ENCODE measurements at regions of chr6 and their contacts with region 1.

Region 1: GRCh38 chr6:166235666-166236292 is 68.1 kb upstream of the TBXT start:
- DNase-seq: no peak
- ATAC-seq: peak; percentile 32
- H3K4me3 Mint-ChIP-seq: peak overlapping the region; percentile 29
- H3K27ac Mint-ChIP-seq: peak overlapping the region; percentile 87
- H3K4me1 Mint-ChIP-seq: peaks cover 70% of the 10 kb centered on the region
- H3K27me3 Mint-ChIP-seq: peaks cover 34% of the 10 kb centered on the region

Region 2: DNA sequence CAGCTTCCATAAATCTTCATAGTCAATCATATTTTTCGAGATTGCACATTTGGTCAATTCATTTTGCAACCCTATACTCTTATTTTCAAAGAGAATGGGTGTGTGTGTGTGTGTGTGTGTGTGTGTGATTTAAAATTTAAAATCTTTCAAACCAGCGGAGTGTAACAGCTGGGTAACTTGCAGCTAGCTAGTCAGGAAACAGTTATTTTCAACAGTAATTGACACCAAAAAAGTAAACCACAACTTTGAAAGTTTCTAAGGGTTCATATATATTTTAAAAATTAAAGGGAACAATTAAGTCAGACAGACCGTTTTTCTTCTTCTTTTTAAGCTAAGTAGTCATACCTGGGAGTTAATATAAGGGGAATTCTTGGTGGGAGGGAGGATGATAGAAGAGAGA is 15.4 kb after region 1 on chr6:
- CTCF ChIA-PET with region 1: interaction called, 12 read pairs
- POLR2A ChIA-PET with region 1: interaction called, 3 read pairs
- DNase-seq: no peak
- ATAC-seq: no peak
- H3K4me3 Mint-ChIP-seq: no peak overlapping the region
- H3K27ac Mint-ChIP-seq: no peak overlapping the region
- H3K4me1 Mint-ChIP-seq: peaks cover 37% of the 10 kb centered on the region
- H3K27me3 Mint-ChIP-seq: peaks cover 40% of the 10 kb centered on the region

Region 3: DNA sequence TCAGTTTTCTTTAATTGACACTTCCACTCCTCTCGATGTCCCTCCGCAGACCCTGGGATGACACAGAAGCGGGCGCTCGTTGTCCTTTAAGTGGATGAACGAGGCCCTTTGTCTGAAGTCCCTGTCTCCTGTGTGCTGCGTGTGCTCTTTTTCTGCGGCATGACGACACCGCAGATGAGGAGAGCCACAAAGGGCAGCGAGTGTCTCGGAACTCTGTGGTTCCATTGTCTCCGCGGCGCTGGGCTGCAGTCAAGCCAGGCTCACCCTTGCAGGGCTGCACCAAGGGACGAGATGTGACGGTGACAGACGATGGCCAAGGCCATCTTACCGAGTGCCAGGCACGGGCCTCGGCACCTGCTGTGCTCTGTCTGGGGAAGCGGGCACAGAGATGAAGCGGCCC is 61.8 kb after region 1 on chr6:
- CTCF ChIA-PET with region 1: no interaction called
- POLR2A ChIA-PET with region 1: no interaction called
- DNase-seq: no peak
- ATAC-seq: no peak
- H3K4me3 Mint-ChIP-seq: no peak overlapping the region
- H3K27ac Mint-ChIP-seq: no peak overlapping the region
- H3K4me1 Mint-ChIP-seq: no peaks in the 10 kb centered on the region
- H3K27me3 Mint-ChIP-seq: peaks cover 40% of the 10 kb centered on the region

Measured in activated CD8-positive, alpha-beta T cell treated with anti-CD3 and anti-CD28 coated beads, Interleukin-2, amount 10 ng/mL, durations not matched to agents 7 days and 5 days (primary cell).